ENCODE measurements at regions of chr9 and their contacts with region 1.

Region 1: DNA sequence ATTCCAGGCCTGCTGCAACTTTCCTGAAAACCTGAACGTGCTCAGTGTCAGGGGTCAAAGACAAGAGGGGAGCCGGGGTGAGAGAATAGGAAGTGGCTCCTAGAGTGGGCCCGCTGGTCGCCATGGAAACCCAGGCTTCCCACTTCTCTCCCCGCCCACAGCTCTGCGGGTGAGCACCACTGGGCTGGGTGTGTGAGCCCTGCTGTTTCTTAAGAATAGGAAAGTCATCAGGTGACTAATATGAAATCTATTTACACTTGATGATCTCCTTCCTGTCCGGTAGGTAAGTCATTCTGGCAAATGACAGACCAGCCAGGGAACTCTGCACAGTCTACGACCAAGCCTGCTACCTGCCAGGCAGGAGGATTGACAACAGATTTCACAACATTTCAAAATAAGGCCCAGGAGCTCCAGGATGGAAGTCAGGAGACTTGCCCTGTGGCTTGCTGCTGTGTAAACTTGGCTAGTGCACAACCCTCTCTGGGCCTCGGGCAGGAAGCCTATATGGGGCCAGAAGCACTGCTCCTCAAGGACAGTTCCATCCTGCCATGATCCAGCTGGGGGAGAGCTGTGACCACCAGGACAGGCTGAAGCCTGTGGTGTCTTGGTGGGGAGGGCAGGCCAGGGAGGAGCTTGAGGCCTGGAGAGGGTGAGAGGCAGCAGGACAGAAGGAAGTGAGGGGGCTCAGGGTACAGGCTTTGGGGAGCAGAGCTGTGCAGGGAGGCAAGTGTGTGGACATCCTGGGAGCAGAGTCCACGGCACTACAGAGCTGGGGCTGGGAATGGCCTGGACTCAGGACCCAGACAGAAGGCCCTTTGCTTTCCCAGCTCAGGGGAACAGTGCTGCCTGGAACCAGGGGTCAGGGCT is 60.6 kb downstream of the SHB start:
- DNase-seq: peak; percentile 94
- ATAC-seq: peak; percentile 84
- H3K4me3 ChIP-seq: no peak overlapping the region
- H3K27ac ChIP-seq: peak overlapping the region; percentile 99
- H3K4me1 ChIP-seq: peaks cover 57% of the 10 kb centered on the region
- H3K27me3 ChIP-seq: no peaks in the 10 kb centered on the region
- CTCF ChIP-seq: no peak

Region 2: DNA sequence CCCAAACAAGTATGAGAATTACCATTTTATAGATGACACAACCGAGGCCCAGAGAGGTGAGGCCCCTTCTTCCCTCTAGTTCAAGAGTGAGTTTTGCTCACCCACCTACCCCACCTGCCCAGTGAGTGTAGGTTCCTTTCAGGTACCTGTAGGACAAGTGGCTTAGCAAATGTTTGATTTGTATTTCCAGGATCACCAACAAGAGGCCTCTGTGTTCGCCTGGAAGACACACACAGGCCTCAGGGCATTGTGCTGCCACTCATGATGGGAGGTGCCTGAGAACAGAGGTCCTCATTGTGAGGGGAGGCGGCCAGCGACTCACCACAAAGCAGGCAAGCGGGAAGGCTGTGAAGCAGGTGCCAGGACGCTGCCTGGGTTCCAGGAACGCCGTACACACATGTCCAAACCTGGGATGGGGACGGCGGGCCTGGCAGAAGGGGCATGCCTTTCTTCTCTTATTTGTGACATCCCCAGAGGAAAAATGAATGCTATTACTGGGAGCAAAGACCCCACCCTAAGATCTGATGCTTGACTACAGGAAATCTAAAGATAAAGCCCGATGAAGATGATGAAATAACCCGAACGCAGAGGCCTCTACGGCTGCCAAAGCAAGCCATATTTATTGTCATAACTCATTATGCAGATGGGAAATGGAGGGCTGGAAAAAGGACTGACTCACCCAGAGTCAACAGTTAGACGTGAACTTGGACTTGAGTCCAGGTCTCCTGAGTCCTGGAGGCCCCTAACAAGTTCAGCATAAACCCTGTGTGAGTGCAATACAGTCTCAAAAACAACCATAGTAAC is 44.3 kb before region 1 on chr9:
- CTCF ChIA-PET with region 1: no interaction called
- POLR2A ChIA-PET with region 1: no interaction called
- intact Hi-C with region 1: loop called (anchors 1 kb)
- DNase-seq: peak; percentile 87
- ATAC-seq: peak; percentile 82
- H3K4me3 ChIP-seq: peak overlapping the region; percentile 19; the same call in 1 of the 2 replicates
- H3K27ac ChIP-seq: peak overlapping the region; percentile 99
- H3K4me1 ChIP-seq: peaks cover 66% of the 10 kb centered on the region
- H3K27me3 ChIP-seq: no peaks in the 10 kb centered on the region
- CTCF ChIP-seq: no peak

Region 3: GRCh38 chr9:37984672-37985611 is 23.5 kb before region 1 on chr9:
- CTCF ChIA-PET with region 1: no interaction called
- POLR2A ChIA-PET with region 1: no interaction called
- intact Hi-C with region 1: no loop called
- DNase-seq: peak; percentile 23
- ATAC-seq: no peak
- H3K4me3 ChIP-seq: no peak overlapping the region
- H3K27ac ChIP-seq: 0 out of 2 replicates have a peak overlapping the region, but pooled peaks have one; percentile 25
- H3K4me1 ChIP-seq: peaks cover 8% of the 10 kb centered on the region; the same call in 1 of the 2 replicates
- H3K27me3 ChIP-seq: no peaks in the 10 kb centered on the region
- CTCF ChIP-seq: no peak

Measured in PC-3 (cell line).